ENCODE measurements at regions of chr16 and their contacts with region 1.

Region 1: GRCh38 chr16:361872-362701 is 8.3 kb downstream of the MRPL28 start:
- DNase-seq: peak; percentile 83
- ATAC-seq: peak; percentile 79
- H3K4me3 Mint-ChIP-seq: no peak overlapping the region
- H3K27ac Mint-ChIP-seq: no peak overlapping the region
- H3K4me1 Mint-ChIP-seq: no peaks in the 10 kb centered on the region
- H3K27me3 Mint-ChIP-seq: no peaks in the 10 kb centered on the region
- CTCF ChIP-seq: 0 out of 2 replicates have a peak, but pooled peaks have one; percentile 30

Region 2: DNA sequence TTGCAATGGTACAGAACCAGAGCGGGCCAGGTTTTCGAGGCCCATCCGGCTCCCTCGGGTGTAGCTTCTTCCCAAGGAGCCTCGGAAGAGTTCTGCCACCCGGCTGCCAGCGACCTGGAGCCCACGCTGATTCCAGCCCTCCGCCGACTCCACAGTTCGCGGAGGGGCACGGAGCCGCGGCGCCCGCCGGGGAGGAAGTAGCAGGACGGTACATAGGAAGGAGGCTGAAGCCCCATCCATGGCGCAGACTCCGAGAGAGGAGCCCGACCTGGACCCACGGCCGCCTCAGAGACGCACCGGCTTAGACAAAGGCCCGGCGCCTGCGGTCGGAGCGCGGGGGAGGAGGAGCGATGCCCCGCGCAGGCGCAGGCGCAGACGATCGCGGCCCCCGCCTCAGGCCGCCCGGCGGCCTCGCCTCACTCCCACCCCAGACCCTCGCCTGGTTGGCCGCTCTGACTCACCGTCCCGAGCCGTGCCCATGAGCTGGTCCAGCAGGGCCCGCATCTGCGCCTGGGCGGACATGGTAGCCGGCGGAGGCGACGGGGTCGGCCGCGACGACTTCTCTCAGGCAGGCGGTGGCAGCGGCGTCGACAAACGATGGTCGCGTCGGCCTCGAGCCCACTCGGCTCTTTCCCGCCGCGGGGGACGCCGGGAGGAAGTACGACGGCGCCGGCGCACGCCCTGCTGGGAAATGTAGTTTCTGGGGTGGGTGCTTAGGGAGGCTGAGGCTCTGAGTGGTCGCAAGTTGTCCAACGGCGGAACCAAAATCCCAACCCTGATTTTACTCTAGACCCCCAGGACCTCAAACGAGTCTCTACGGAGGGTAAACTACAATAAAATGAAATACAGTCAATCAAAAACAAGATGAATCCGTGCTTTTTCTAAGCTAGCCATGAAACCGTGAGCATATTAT is 133.0 kb before region 1 on chr16 and contains the start of gene LUC7L:
- CTCF ChIA-PET with region 1: interaction called, 13 read pairs
- POLR2A ChIA-PET with region 1: no interaction called
- DNase-seq: peak; percentile 91
- ATAC-seq: peak; percentile 90
- H3K4me3 Mint-ChIP-seq: peak within 1 kb of the TSS; percentile 94
- H3K27ac Mint-ChIP-seq: peak within 1 kb of the TSS; percentile 74; the same call in 1 of the 2 replicates
- H3K4me1 Mint-ChIP-seq: peaks cover 21% of the 10 kb centered on the region
- H3K27me3 Mint-ChIP-seq: no peaks in the 10 kb centered on the region
- CTCF ChIP-seq: no peak
- total RNA-seq, gene LUC7L: 111 to 135 TPM (median 130 TPM) in 3 replicates

Region 3: DNA sequence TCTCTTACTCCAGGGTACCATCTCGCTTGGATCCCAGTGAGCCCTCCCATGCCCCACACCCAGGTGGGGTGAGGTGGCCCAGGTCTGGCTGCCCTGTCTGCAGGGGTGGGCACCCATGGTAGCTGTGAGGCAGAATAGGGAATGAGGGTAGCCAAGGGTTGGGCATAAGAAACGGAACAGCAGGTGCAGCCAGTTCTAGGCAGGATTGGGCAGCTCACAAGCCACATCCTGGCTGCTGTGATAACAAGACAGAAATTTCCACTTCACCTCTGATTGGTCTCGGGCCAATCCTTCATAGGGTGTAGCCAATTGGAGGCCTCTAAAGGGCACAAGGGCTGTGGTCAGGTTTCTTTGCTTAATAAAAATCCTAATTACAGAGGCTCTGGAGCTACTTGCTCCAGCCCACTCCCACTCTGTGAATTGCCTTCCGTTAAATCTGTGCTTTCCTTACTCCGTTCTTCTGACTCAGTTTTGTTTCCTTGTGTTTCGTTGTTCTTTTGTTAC is 83.2 kb before region 1 on chr16:
- CTCF ChIA-PET with region 1: interaction called, 15 read pairs
- POLR2A ChIA-PET with region 1: no interaction called
- DNase-seq: no peak
- ATAC-seq: peak; percentile 22
- H3K4me3 Mint-ChIP-seq: no peak overlapping the region
- H3K27ac Mint-ChIP-seq: no peak overlapping the region
- H3K4me1 Mint-ChIP-seq: no peaks in the 10 kb centered on the region; the same call in 1 of the 2 replicates
- H3K27me3 Mint-ChIP-seq: peaks cover 51% of the 10 kb centered on the region
- CTCF ChIP-seq: no peak

Region 4: GRCh38 chr16:290681-291405 is 71.2 kb before region 1 on chr16:
- CTCF ChIA-PET with region 1: no interaction called
- POLR2A ChIA-PET with region 1: no interaction called
- DNase-seq: no peak
- ATAC-seq: no peak
- H3K4me3 Mint-ChIP-seq: no peak overlapping the region
- H3K27ac Mint-ChIP-seq: no peak overlapping the region
- H3K4me1 Mint-ChIP-seq: no peaks in the 10 kb centered on the region
- H3K27me3 Mint-ChIP-seq: no peaks in the 10 kb centered on the region
- CTCF ChIP-seq: no peak

Region 5: GRCh38 chr16:303760-304505 is 58.2 kb before region 1 on chr16:
- CTCF ChIA-PET with region 1: interaction called, 14 read pairs
- POLR2A ChIA-PET with region 1: no interaction called
- DNase-seq: no peak
- ATAC-seq: 0 out of 2 replicates have a peak, but pooled peaks have one; percentile 20
- H3K4me3 Mint-ChIP-seq: no peak overlapping the region
- H3K27ac Mint-ChIP-seq: peak overlapping the region; percentile 78
- H3K4me1 Mint-ChIP-seq: no peaks in the 10 kb centered on the region
- H3K27me3 Mint-ChIP-seq: no peaks in the 10 kb centered on the region
- CTCF ChIP-seq: no peak

Region 6: GRCh38 chr16:381789-382717 is 20.0 kb after region 1 on chr16 and contains the start of gene PGAP6:
- CTCF ChIA-PET with region 1: interaction called, 15 read pairs
- POLR2A ChIA-PET with region 1: interaction called, 3 read pairs
- DNase-seq: peak; percentile 57
- ATAC-seq: no peak
- H3K4me3 Mint-ChIP-seq: peak within 1 kb of the TSS; percentile 79
- H3K27ac Mint-ChIP-seq: peak within 1 kb of the TSS; percentile 98
- H3K4me1 Mint-ChIP-seq: peaks cover 40% of the 10 kb centered on the region
- H3K27me3 Mint-ChIP-seq: no peaks in the 10 kb centered on the region
- CTCF ChIP-seq: no peak
- total RNA-seq, gene PGAP6: 104 to 108 TPM (median 107 TPM) in 3 replicates

Region 7: DNA sequence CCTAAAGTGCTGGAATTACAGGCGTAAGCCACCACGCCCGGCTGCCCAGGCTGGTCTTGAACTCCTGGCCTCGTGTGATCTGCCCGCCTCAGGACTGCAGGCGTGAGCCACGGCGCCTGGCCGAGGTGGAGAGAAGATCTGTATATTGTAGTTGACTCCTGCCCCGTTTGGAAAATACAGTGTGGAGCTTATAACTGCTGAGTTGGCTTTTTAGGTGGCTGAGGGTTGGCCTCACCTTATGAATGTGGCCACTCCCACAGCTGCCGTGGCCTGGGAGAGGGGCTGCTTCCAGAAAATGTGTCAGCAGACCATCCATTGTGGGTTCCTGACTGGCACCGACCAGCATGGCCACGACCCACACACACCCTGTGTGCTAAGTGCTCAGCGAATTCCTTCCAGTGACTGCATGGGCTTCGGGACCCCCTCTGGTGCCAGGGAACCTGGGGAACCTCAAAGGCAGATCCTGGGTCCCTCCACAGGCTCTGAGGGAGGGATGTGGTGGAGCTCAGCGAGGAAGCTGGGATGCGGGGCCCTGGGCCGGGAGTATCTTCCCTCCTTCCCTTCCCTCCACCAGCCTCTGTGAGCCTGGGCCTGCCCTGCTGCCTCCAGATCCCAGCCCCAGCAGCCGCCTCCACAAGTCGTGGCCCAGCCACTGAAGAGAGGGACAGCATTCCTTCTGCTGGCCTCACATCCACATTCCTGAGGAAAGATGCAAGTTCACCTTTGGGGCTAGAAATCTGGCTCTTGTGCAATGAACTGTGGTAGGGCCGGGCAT is 52.5 kb after region 1 on chr16:
- CTCF ChIA-PET with region 1: no interaction called
- POLR2A ChIA-PET with region 1: no interaction called
- DNase-seq: no peak
- ATAC-seq: no peak
- H3K4me3 Mint-ChIP-seq: no peak overlapping the region
- H3K27ac Mint-ChIP-seq: no peak overlapping the region
- H3K4me1 Mint-ChIP-seq: no peaks in the 10 kb centered on the region
- H3K27me3 Mint-ChIP-seq: no peaks in the 10 kb centered on the region
- CTCF ChIP-seq: no peak